ENCODE measurements at regions of chr2 and their contacts with region 1.

Region 1: DNA sequence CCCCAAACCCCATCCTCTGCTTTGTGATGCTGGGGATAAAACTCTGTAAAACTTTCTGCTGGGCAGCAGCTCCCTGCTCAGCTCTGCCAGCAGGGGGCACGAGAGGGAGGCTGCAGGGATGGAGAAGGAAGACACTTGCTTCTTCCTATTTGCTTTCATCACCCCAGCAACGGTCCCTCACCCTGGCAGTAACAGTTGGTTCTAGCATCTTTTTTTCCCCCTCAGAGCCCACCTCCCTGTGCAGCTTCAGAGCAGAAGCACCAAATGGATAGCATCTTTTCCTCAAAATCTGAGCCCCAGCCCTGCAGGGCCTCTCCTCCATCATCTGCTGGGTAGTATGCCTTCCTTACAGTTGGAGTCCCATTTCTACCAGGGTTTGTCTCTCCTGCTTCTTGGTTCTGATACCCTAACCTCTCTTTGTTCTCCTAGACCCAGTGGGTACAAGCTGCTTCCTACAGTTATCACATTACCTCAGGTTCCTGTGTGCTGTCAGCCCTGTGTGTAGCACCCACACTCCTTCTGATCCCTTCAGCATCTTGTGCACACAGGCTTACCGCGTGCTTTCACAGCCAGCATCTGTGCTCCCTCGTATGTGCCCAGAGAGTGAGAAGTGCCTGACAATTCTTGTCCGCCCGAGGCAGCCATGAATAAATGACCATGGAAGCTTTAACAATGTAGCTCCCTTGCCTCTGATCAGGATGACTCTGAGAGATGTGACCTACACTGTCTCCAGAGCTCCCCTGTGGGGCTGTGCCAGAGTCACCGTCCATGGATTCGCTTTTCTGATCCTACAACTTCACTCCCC is 14.5 kb downstream of the CKAP2L start:
- DNase-seq: peak; percentile 91

Region 2: DNA sequence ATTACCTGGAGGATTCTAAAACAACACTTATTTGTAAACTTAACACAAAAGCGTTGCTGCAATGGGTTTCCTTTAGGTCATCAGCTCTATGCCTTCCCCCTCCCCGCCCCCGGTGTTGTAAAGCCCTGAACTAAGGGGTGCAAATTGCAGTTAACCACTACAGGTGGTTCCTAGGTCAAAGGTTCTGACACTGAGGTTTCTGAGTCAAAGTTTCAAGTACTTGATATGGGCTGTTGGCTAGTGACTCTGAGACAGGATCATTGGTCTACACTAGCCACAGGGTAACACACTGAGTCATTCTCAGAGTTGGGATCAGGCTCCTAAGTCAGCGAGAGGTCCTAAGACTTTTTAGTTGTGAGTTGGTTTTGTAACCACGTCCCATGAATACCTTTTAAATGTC is 71.2 kb after region 1 on chr2:
- intact Hi-C with region 1: no loop called
- DNase-seq: no peak

Region 3: DNA sequence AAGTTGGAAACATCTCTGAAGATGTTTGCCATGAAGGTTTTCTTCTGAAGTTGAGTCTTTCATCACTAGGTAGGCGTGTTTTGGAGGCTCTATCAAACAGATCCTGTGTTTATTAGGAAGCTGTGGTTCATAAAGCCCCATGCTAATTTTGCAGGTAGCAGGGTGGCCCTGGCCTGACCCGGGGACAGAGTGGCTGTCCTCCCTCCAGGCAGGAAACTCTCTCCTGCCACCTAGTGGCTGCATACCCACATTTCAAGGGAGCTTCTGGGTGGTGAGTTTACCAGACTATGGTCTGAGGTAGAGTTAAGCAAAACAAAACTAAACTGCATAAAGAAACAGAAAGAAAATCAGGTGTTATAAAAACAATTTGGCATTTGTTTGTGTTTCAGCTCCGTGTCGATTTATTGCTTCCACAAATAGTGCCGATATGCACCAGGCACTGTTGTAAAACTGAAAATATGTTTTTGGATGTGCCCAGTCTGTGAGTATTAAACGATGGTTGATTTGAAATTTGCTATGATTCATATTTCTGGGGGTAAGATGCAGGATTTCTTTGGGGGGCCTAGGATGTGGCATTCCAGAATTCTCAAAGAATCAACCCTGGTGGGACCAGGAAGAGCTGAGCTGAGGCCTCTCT is 135.0 kb after region 1 on chr2:
- intact Hi-C with region 1: loop called (anchors 2 kb)
- DNase-seq: peak; percentile 85

Region 4: GRCh38 chr2:112941753-112942658 is 192.0 kb after region 1 on chr2:
- intact Hi-C with region 1: loop called (anchors 2 kb)
- DNase-seq: no peak